Activated T-helper 1 cell treated with anti-CD3 and anti-CD28 coated beads, Interleukin-12 subunit alpha, Interleukin-12 subunit beta, Interleukin-2, Interleukin-4 antibody, amounts not matched to agents 30 ng/mL and 10 ng/mL and 1 ng/mL, durations not matched to agents 14 hours and 24 hours and 36 hours (primary cell): ENCODE measurements at regions of chr12 and their contacts with region 1.

Region 1: DNA sequence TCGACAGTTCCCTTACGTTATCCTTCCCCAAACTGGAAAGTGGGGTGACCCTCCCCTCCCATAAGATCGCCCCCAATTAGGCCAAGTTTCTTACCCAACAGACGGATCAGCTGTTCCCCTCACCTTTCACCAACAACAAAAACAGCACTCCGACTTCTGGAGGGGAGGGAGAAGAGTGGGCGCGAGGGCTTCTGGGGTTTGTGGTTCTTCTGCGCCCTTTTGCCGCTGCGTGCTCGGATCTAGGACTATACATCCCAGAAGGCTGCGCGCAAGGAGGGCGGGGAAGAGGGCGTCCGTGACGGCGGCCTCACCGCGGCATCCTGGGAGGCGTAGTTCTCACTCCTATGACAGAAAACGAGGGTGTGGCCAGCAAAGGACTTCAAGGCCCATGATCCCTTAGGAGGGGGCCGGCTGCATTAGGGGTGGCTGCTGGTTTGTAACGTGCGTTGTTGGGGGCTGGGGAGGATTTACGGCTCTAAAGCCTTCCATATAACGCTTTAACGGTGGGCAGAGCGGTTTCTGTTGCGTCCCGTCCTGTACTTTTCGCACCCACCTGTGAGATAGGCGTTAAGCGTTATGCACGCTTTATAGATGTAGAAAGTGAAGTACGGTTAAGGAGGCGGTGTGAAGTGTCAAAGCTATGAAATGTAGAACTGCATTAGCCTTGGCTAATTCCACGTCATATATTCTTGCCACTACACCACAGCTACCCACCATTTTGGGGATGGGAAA is at the start of gene CALCOCO1:
- DNase-seq: peak; percentile 96
- H3K4me3 Mint-ChIP-seq: peak within 1 kb of the TSS; percentile 92
- H3K27ac Mint-ChIP-seq: peak within 1 kb of the TSS; percentile 80
- H3K4me1 Mint-ChIP-seq: peaks cover 26% of the 10 kb centered on the region
- H3K27me3 Mint-ChIP-seq: no peaks in the 10 kb centered on the region
- total RNA-seq, gene CALCOCO1: 17.4 and 19.2 TPM in 2 replicates

Region 2: DNA sequence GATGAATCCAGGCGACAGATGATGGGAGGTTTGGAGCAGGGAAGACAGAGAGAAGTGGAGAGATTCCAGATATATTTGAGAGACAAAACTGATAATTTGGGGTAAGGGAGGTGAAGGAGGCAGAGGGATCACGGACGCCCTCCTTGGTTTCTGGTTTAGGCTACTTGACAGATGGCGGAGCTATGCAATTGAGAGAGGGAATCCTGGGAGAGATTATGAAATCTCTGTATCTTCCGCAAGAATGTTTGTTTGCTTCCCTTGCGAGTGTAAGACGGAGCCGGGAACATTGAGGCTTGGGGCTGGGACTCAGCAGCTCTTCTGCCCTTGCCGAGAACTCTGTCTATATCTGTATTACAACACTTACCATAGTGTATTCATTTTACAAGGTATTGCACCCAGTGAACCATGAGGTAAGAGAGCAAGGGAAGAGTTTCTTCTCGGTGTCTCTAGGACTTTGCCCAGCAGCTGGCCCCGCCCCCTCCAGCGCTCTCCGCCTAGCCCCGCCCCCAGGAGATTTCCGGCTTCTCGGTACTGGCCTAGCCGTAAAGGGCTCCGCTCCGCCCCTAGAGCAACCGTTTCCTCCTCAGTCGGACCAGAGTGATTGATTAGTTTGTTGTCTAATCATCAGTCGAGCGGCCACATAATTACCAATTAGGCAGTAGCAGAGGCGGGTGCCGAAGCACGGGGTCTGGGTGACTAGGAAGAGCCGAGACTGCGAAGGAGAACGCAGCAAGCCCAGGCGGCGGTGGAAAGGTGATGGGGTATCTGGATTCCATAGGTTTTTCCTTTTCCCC is 286.2 kb before region 1 on chr12 and contains the start of gene PRR13:
- intact Hi-C with region 1: loop called (anchors 1 kb)
- DNase-seq: peak; percentile 96
- H3K4me3 Mint-ChIP-seq: peak within 1 kb of the TSS; percentile 89
- H3K27ac Mint-ChIP-seq: peak within 1 kb of the TSS; percentile 86
- H3K4me1 Mint-ChIP-seq: peaks cover 35% of the 10 kb centered on the region
- H3K27me3 Mint-ChIP-seq: no peaks in the 10 kb centered on the region
- total RNA-seq, gene PRR13: 206 and 219 TPM in 2 replicates

Region 3: GRCh38 chr12:53625946-53626701 is 101.4 kb before region 1 on chr12 and contains the start of gene ATF7:
- intact Hi-C with region 1: loop called (anchors 1 kb)
- DNase-seq: peak; percentile 98
- H3K4me3 Mint-ChIP-seq: peak within 1 kb of the TSS; percentile 99
- H3K27ac Mint-ChIP-seq: peak within 1 kb of the TSS; percentile 89
- H3K4me1 Mint-ChIP-seq: peaks cover 36% of the 10 kb centered on the region
- H3K27me3 Mint-ChIP-seq: no peaks in the 10 kb centered on the region
- total RNA-seq, gene ATF7: 21.5 and 25.9 TPM in 2 replicates

Region 4: DNA sequence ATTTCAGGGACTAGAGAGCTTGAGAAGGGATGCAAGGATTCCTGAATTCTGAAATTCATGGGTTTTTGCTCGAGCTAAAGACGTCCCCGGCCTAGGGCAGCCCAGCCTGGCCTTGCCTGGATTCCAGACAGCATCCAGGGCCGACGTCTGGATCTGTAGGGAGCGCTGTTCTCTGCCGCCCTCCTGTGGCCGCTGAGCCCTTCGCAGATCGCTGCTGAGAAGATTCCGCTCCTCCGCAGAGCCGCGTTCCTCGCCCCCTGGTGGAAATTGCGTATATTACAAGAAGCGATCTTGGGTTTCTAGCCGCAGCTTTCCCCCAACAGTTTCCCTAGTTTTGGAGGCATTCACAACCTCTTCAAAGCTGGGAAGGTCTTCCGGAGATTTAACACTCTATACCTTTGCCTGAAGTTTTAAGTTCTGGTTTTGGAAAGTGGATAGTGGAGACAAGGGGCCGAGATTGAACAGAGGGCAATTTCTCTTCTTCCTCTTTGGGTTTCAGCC is 19.2 kb after region 1 on chr12:
- intact Hi-C with region 1: loop called (anchors 1 kb)
- DNase-seq: peak; percentile 78
- H3K4me3 Mint-ChIP-seq: no peak overlapping the region
- H3K27ac Mint-ChIP-seq: no peak overlapping the region
- H3K4me1 Mint-ChIP-seq: peaks cover 12% of the 10 kb centered on the region
- H3K27me3 Mint-ChIP-seq: peaks cover 40% of the 10 kb centered on the region

Region 5: DNA sequence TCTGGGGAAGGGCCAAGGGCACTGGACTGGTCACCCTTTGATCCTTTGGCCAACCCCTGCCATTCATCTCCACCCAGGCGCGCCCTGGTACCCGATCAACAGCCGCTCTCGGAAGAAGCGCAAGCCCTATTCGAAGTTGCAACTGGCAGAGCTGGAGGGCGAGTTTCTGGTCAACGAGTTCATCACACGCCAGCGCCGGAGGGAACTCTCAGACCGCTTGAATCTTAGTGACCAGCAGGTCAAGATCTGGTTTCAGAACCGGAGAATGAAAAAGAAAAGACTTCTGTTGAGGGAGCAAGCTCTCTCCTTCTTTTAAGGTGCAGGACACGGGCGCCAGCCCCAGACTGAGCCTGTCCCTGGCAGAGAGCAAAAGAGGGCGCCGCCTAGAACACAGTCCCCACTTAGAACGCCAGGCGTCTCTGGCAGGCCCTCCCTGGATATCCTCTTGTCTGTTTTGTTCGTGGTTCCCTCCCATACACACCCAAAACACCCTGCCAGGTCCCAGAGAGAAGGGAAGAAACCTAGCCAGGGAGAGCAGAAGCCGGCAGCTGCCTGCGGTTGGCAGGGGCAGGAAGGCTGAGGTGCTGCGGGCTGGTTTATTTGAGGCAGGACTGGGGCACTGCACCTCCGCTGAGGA is 228.9 kb after region 1 on chr12:
- intact Hi-C with region 1: no loop called
- DNase-seq: no peak
- H3K4me3 Mint-ChIP-seq: no peak overlapping the region
- H3K27ac Mint-ChIP-seq: peak overlapping the region; percentile 63
- H3K4me1 Mint-ChIP-seq: no peaks in the 10 kb centered on the region
- H3K27me3 Mint-ChIP-seq: peaks cover 84% of the 10 kb centered on the region

Region 6: GRCh38 chr12:54191550-54192022 is 464.1 kb after region 1 on chr12:
- intact Hi-C with region 1: loop called (anchors 1 kb)
- DNase-seq: peak; percentile 64
- H3K4me3 Mint-ChIP-seq: no peak overlapping the region
- H3K27ac Mint-ChIP-seq: no peak overlapping the region
- H3K4me1 Mint-ChIP-seq: peaks cover 32% of the 10 kb centered on the region
- H3K27me3 Mint-ChIP-seq: peaks cover 43% of the 10 kb centered on the region